ENCODE measurements at regions of chr1 and their contacts with region 1.

Region 1: DNA sequence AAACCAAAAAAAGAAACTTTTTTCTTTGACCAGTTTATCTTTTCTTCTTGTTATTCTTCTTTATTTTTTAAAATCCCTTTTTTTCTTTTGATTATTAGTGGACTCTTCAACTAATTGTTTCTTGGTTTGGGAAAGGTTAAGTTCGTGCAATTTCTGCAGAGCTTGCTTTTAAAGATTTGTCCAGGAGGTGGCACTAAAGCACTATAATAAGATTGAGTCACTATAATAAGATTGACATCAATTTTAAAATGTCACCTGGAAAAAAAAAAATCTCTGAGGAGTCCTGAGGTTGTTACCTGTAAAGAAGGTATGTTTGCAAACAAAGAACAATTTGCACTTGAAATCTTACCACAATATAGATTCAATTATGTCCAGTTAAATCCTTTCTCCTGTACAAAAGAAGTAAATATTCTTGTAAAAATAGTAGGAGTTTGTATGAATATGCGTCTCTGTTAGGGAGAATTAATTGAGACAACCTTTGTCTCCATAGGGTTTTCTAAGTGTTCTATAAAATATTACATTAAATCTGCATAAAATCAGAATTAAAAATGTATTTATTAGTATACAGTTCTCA is 166.7 kb downstream of the ADGRL4 start:
- DNase-seq: peak; percentile 40
- H3K4me3 ChIP-seq: 0 out of 4 replicates have a peak overlapping the region, but pooled peaks of 1 of the 2 experiments have one; percentile 32
- H3K27ac ChIP-seq: peak overlapping the region; percentile 32 to 90; a peak in 2 of 4 replicates
- H3K4me1 ChIP-seq: peaks cover 5 to 29% of the 10 kb centered on the region in 2 experiments; a peak in 3 of 4 replicates
- H3K27me3 ChIP-seq: no peaks in the 10 kb centered on the region
- CTCF ChIP-seq: peak; percentile 87
- EP300 ChIP-seq: no peak
- RAD21 ChIP-seq: peak; percentile 84

Region 2: DNA sequence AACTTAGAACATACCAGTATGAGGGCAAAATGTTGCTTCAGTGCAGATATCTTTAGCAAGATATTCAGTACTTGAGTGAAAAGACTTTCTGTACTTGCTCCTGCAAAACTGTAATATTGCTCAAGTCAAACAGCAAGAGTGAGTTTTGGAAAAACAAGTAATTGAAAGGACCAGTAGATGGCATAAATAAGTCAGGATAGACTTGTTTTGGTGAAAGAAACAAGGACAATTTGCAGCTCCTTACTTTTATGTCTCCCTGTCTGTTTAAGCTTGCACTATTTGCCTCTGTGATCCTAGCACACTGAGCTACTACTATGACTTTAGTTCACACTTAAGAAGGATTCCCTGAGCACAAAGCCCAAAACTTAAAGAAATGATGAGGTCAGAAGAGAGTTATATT is 151.1 kb before region 1 on chr1:
- CTCF ChIA-PET with region 1: interaction called, 16 read pairs
- POLR2A ChIA-PET with region 1: no interaction called
- DNase-seq: peak; percentile 14
- H3K4me3 ChIP-seq: no peak overlapping the region; a peak in 1 of 4 replicates
- H3K27ac ChIP-seq: peak overlapping the region; percentile 67 to 79; a peak in 3 of 4 replicates
- H3K4me1 ChIP-seq: peaks cover 4 to 20% of the 10 kb centered on the region in 2 experiments
- H3K27me3 ChIP-seq: no peaks in the 10 kb centered on the region
- CTCF ChIP-seq: peak; percentile 62
- EP300 ChIP-seq: no peak
- RAD21 ChIP-seq: peak; percentile 72

Region 3: GRCh38 chr1:78958711-78959110 is 118.9 kb after region 1 on chr1:
- CTCF ChIA-PET with region 1: no interaction called
- POLR2A ChIA-PET with region 1: no interaction called
- DNase-seq: no peak
- H3K4me3 ChIP-seq: no peak overlapping the region
- H3K27ac ChIP-seq: no peak overlapping the region
- H3K4me1 ChIP-seq: no peaks in the 10 kb centered on the region
- H3K27me3 ChIP-seq: no peaks in the 10 kb centered on the region
- CTCF ChIP-seq: no peak
- EP300 ChIP-seq: no peak
- RAD21 ChIP-seq: no peak

Region 4: DNA sequence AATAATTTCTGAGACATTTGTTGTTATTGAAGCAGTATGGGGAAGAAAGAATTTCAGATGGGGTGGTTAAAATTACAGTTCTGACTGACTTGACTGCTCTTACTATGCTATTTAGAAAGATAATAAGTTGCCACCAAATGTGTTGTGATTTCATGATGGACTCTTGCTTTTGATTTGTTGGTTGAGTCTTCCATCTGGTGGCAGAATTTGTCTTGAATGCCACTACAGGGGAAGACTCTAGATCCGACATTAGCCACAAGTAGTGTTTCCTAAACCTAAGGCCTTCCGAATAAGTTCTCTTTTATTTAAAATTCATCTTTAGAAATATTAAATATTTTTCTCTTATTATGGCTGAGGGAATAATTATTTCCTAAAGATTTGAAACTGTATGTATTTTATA is 357.6 kb after region 1 on chr1:
- CTCF ChIA-PET with region 1: interaction called, 16 read pairs
- POLR2A ChIA-PET with region 1: no interaction called
- DNase-seq: peak; percentile 2
- H3K4me3 ChIP-seq: no peak overlapping the region
- H3K27ac ChIP-seq: no peak overlapping the region
- H3K4me1 ChIP-seq: peaks cover 0 to 10% of the 10 kb centered on the region in 2 experiments; a peak in 2 of 4 replicates
- H3K27me3 ChIP-seq: no peaks in the 10 kb centered on the region
- CTCF ChIP-seq: peak; percentile 56
- EP300 ChIP-seq: no peak
- RAD21 ChIP-seq: peak; percentile 77